Activated CD4-positive, alpha-beta T cell treated with anti-CD3 and anti-CD28 coated beads for 36 hours (primary cell): ENCODE measurements at regions of chr5 and their contacts with region 1.

Region 1: GRCh38 chr5:69334793-69335268 is 2.2 kb upstream of the CCDC125 start:
- DNase-seq: peak; percentile 91
- ATAC-seq: peak; percentile 78
- H3K4me3 Mint-ChIP-seq: no peak overlapping the region
- H3K27ac Mint-ChIP-seq: no peak overlapping the region
- H3K4me1 Mint-ChIP-seq: peaks cover 15% of the 10 kb centered on the region
- H3K27me3 Mint-ChIP-seq: no peaks in the 10 kb centered on the region

Region 2: DNA sequence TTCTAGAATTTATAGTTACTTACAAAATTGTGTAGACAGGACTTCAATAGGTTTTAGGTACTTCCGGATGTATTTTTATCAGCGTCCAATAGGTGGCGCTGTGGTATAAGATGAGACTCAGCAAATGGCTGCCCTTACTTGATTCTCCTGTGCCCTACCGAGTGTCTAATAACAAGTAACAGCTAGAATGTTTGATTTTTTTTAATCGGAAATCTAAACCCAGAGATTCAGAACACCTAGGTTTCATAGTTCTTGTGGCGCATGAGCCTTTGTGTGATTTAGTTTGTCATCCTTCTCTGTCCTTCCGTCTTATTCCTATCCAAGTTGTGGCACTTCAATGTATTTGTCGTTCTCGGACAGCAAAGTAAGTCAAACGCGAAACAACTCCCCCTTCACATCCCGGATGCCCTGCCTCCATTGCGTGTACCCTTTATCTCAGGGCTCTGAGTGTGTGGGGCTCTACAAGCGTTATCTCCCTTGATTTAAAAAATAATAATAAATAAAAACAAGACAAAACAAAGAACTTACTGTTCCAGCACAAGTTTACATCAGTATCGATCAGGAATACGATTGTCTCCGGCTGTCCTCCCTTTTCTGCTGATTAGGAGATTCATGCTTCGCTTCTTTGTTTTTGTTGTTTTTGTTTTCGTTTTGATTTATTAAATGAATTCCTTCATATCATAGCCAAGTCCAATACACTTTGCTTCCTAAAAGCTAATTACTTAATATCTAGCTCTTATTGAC is 291.7 kb before region 1 on chr5:
- CTCF ChIA-PET with region 1: interaction called, 4 read pairs
- POLR2A ChIA-PET with region 1: no interaction called
- intact Hi-C with region 1: loop called (anchors 2 to 10 kb)
- DNase-seq: peak; percentile 86
- ATAC-seq: peak; percentile 97
- H3K4me3 Mint-ChIP-seq: peak overlapping the region; percentile 70
- H3K27ac Mint-ChIP-seq: peak overlapping the region; percentile 78
- H3K4me1 Mint-ChIP-seq: peaks cover 15% of the 10 kb centered on the region
- H3K27me3 Mint-ChIP-seq: no peaks in the 10 kb centered on the region

Region 3: DNA sequence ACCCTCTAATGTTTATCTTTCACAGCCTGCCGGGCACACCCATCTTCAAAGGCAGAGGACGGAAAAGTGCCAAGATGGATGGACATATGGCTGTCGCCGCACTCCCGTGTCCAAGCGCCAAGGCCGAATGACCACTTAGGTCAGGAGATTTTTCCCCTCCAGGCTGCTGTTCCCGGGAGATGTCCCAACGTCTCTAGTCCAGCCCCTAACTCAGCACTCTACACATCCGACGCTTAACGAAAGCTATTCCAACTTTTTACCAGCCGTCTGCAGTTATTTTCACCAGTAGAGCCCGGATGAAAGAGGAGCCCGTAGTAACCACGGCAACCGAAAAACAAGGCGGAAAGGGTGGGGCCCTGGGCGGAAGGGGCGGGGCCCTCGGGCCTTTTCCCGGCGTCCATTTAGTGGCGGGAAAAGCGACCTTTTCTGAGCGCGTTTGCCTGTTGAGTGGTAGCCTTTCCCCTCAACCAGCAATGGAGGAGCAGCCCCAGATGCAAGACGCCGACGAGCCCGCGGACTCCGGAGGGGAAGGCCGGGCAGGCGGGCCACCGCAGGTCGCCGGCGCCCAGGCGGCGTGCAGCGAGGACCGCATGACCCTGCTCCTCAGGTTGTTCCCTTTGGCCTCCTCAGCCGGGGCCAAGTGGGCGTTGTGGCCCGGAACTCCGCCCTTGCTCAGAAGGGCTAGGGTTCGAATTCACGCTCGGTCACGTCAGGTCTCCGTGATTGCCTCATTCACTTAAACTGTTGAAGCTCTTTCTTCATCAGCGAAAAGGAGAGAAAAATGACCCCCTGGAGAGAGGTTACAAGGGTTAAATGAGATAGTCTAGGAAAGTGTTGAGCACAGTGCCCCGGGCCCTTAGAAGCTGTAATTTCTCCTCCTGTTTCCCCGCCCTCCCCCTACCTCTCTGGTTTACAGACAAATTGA is 145.4 kb before region 1 on chr5 and contains the start of gene CENPH:
- CTCF ChIA-PET with region 1: no interaction called
- POLR2A ChIA-PET with region 1: no interaction called
- intact Hi-C with region 1: loop called in 1 of 2 experiments (anchors 1 kb)
- DNase-seq: peak; percentile 95
- ATAC-seq: peak; percentile 90
- H3K4me3 Mint-ChIP-seq: peak within 1 kb of the TSS; percentile 96
- H3K27ac Mint-ChIP-seq: peak within 1 kb of the TSS; percentile 99
- H3K4me1 Mint-ChIP-seq: peaks cover 8% of the 10 kb centered on the region
- H3K27me3 Mint-ChIP-seq: no peaks in the 10 kb centered on the region
- total RNA-seq, gene CENPH: 96.0 to 98.3 TPM

Region 4: DNA sequence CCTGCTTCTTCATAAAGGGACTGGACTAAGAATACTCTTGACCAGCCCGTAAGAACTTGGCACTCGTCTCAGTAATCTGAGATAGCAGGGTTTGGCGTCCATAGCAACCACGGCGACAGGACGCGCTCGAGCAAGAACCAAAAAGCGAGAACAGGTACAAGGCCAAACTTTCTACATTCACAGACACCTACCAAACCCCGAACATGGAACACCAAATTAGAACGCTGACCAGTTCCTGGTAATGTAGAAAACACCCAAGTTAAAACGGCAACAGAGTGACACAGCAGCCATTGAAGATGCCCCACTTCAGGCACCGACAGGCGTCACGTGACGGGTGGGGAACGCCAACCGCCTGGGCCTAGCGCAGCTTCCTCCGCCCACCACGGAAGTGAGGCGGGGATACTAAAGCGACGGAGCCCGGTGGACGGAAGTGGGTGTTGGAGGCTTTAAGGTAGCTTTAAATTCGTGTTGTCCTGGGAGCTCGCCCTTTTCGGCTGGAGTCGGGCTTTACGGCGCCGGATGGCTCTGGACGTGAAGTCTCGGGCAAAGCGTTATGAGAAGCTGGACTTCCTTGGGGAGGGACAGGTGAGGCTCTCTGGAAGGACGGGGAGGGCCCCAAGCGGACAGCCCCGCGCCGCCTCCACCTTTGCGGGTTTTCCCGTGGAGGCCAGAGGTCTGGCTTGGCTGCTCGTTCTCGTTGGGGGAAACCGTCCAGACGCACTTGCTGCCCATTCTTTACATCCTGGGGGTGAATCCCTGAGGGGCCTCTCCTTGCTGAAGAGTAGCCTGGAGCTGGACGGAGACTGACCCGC is 100.2 kb before region 1 on chr5 and contains the start of gene CDK7:
- CTCF ChIA-PET with region 1: interaction called, 7 read pairs
- POLR2A ChIA-PET with region 1: interaction called, 4 read pairs
- intact Hi-C with region 1: loop called (anchors 1 to 10 kb)
- DNase-seq: peak; percentile 96
- ATAC-seq: peak; percentile 100
- H3K4me3 Mint-ChIP-seq: peak within 1 kb of the TSS; percentile 80
- H3K27ac Mint-ChIP-seq: peak within 1 kb of the TSS; percentile 88
- H3K4me1 Mint-ChIP-seq: peaks cover 35% of the 10 kb centered on the region
- H3K27me3 Mint-ChIP-seq: no peaks in the 10 kb centered on the region
- total RNA-seq, gene CDK7: 47.0 to 47.8 TPM

Region 5: GRCh38 chr5:69308046-69308553 is 26.7 kb before region 1 on chr5:
- CTCF ChIA-PET with region 1: no interaction called
- POLR2A ChIA-PET with region 1: no interaction called
- intact Hi-C with region 1: no loop called
- DNase-seq: peak; percentile 8
- ATAC-seq: peak; percentile 53
- H3K4me3 Mint-ChIP-seq: no peak overlapping the region
- H3K27ac Mint-ChIP-seq: peak overlapping the region; percentile 58
- H3K4me1 Mint-ChIP-seq: peaks cover 12% of the 10 kb centered on the region
- H3K27me3 Mint-ChIP-seq: no peaks in the 10 kb centered on the region